PC-9 (cell line): ENCODE measurements at regions of chr11 and their contacts with region 1.

Region 1: DNA sequence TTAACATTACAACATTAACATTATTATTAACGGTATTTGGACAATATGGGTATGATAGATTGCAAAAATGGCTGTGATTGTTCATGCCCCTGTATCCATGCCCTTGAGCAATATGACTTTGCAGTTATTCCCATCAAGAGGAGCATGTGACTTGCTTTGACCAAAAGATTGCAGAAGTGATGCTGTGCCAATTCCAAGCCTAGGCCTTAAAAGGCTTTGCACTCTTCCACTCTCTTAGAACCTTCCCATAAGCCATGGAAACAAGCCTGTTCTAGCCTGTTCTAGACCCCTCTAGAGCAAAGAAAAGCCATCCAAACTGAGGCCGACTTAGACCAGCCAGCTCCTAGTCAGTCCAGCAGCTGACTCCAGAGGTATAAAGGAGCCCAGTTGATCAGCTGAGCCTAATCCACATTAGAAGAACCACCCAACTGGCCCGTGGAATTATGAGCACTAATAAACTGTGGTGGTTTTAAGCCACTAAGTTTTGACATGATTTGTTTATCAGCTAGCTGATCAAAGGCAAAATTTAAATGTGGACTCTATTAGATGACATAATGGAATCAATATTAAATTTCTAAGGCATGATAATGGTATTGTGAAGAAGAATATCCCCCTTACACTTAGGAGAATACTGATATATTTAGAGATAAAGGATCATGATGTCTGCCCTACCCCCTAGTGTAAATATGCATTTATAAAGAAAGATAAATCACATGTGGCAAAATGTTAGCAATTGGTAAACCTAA is 28.6 kb downstream of the RAB30 start:
- DNase-seq: no peak
- H3K4me3 ChIP-seq: no peak overlapping the region
- H3K27ac ChIP-seq: no peak overlapping the region
- H3K4me1 ChIP-seq: peaks cover 21% of the 10 kb centered on the region
- H3K27me3 ChIP-seq: no peaks in the 10 kb centered on the region
- CTCF ChIP-seq: no peak

Region 2: GRCh38 chr11:83102834-83103233 is 59.7 kb after region 1 on chr11:
- CTCF ChIA-PET with region 1: no interaction called
- POLR2A ChIA-PET with region 1: interaction called, 15 read pairs
- intact Hi-C with region 1: no loop called
- DNase-seq: no peak
- H3K4me3 ChIP-seq: no peak overlapping the region
- H3K27ac ChIP-seq: no peak overlapping the region
- H3K4me1 ChIP-seq: no peaks in the 10 kb centered on the region
- H3K27me3 ChIP-seq: no peaks in the 10 kb centered on the region
- CTCF ChIP-seq: no peak

Region 3: DNA sequence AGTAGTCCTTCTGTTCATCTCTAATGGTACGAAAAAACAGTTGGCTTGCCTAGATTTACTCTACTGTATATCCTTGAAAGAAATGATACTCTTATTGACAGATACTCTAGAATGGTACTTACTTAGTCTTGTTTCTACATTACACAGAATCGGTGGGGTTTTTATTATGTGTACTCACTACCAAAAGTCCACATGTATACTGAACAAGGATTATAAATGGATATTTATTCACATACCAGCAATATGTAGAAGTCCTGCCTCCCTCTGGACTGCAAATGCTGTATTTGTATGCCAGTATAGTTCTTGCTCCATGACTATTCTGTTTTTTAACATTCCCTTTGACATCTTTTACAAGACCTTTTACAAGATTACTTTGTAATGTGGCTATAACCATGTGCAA is 127.7 kb after region 1 on chr11:
- CTCF ChIA-PET with region 1: no interaction called
- POLR2A ChIA-PET with region 1: no interaction called
- intact Hi-C with region 1: no loop called
- DNase-seq: no peak
- H3K4me3 ChIP-seq: no peak overlapping the region
- H3K27ac ChIP-seq: no peak overlapping the region
- H3K4me1 ChIP-seq: peaks cover 16% of the 10 kb centered on the region; the same call in 1 of the 2 replicates
- H3K27me3 ChIP-seq: no peaks in the 10 kb centered on the region
- CTCF ChIP-seq: no peak